Activated CD8-positive, alpha-beta T cell treated with anti-CD3 and anti-CD28 coated beads for 36 hours (primary cell): ENCODE measurements at regions of chr19 and their contacts with region 1.

Region 1: DNA sequence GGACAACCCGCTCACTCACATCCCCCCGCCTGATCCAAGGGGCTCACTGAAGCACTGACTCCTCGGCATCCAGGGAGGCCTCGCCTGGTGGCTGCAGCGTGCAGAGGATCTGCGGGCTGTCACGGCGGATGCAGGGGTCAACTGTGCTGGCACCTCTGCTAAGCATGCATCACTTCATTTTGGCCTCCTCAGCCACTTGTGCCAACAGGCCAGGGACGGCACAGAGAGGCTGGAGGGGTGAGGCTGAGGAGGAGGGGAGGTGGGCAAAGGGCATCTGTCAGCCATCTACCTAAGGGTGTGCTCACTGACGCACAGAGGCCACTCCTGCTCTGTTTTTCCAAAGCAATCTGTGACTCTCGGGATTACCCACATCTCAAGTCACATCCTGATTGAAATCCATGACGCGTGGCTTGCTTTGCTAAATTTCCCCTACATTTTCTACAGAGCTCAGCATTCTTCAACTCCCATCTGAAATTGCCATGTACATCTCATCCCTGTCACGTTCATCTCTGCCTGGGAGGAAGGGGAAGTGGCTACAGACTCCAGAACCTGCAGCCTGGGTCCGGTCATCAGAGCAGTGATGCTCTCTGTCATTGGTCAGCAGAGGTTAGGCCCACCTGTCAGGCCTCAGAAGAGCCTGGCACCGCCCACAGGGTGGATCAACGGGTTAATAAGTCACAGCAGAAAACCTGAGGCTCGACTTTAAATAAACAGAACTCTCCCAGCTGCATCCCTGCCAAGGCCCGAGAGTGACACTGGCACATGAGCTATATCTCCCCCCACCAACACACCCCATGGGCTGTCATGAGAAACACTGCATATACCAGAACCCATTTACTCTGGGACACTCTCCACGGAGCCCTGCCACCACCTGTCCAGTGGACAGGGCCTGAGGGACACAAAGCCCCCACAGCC is 17.6 kb downstream of the ELL start:
- DNase-seq: no peak
- ATAC-seq: no peak
- H3K4me3 Mint-ChIP-seq: no peak overlapping the region
- H3K27ac Mint-ChIP-seq: peak overlapping the region; percentile 36
- H3K4me1 Mint-ChIP-seq: peaks cover 91% of the 10 kb centered on the region
- H3K27me3 Mint-ChIP-seq: no peaks in the 10 kb centered on the region
- CTCF ChIP-seq: no peak

Region 2: DNA sequence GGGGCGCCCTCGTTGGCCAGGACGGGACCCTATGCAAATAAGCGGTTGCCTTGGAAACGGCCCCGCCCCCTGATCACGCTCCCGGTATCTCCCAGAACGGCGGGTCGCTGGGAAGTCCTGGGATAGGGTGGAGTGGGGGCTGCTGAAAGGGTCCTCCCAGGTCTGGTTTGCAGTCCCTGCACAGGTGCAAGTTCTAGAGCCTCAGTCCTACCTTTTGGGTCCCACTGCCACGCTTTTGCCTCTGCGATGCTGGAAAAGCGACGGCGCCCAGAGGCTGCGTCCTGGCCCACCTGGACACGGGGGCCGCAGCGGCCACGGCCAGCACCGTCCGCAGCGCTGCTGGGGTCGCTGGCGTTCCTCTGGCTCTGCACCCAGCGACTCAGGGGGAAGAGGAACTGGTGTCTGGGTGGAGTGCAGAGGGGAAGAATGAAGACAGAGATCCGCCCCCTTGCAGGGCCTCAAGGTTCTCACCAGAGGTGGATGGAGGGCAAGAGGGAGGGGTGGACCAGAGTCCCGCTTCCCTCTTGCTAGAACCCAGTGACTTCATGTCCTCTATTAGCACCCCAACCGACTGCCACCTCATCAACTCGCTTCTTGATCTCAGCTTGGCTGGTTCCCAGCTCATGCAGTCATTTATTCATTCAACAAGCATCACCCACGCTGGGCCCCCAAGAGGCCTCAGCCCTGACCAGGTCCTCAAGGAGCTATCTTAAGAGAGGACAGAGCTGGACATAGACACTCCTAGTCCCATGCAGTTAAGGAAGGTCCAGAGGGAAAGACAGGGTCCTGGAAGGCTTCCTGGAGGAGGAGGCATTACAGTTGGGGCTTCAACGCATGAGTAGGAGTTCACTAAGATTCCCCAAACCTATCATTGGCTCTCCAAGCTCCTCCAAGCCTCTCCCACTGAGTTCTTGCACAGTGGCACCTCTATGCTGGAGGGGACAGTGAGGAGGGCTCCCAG is 106.7 kb before region 1 on chr19 and contains the start of gene LRRC25:
- CTCF ChIA-PET with region 1: no interaction called
- POLR2A ChIA-PET with region 1: no interaction called
- intact Hi-C with region 1: no loop called
- DNase-seq: peak; percentile 37
- ATAC-seq: peak; percentile 79
- H3K4me3 Mint-ChIP-seq: no peak within 1 kb of the TSS
- H3K27ac Mint-ChIP-seq: no peak within 1 kb of the TSS
- H3K4me1 Mint-ChIP-seq: no peaks in the 10 kb centered on the region
- H3K27me3 Mint-ChIP-seq: peaks cover 12% of the 10 kb centered on the region
- CTCF ChIP-seq: no peak
- total RNA-seq, gene LRRC25: not detected

Region 3: GRCh38 chr19:18469069-18469846 is 35.0 kb before region 1 on chr19:
- CTCF ChIA-PET with region 1: interaction called, 11 read pairs
- POLR2A ChIA-PET with region 1: no interaction called
- intact Hi-C with region 1: no loop called
- DNase-seq: peak; percentile 77
- ATAC-seq: peak; percentile 56
- H3K4me3 Mint-ChIP-seq: no peak overlapping the region
- H3K27ac Mint-ChIP-seq: no peak overlapping the region
- H3K4me1 Mint-ChIP-seq: peaks cover 28% of the 10 kb centered on the region
- H3K27me3 Mint-ChIP-seq: no peaks in the 10 kb centered on the region
- CTCF ChIP-seq: no peak

Region 4: GRCh38 chr19:18488838-18489626 is 15.2 kb before region 1 on chr19:
- CTCF ChIA-PET with region 1: interaction called, 17 read pairs
- POLR2A ChIA-PET with region 1: interaction called, 3 read pairs
- intact Hi-C with region 1: no loop called
- DNase-seq: no peak
- ATAC-seq: no peak
- H3K4me3 Mint-ChIP-seq: no peak overlapping the region
- H3K27ac Mint-ChIP-seq: no peak overlapping the region
- H3K4me1 Mint-ChIP-seq: peaks cover 49% of the 10 kb centered on the region
- H3K27me3 Mint-ChIP-seq: no peaks in the 10 kb centered on the region
- CTCF ChIP-seq: no peak